ENCODE measurements at regions of chr6 and their contacts with region 1.

Region 1: DNA sequence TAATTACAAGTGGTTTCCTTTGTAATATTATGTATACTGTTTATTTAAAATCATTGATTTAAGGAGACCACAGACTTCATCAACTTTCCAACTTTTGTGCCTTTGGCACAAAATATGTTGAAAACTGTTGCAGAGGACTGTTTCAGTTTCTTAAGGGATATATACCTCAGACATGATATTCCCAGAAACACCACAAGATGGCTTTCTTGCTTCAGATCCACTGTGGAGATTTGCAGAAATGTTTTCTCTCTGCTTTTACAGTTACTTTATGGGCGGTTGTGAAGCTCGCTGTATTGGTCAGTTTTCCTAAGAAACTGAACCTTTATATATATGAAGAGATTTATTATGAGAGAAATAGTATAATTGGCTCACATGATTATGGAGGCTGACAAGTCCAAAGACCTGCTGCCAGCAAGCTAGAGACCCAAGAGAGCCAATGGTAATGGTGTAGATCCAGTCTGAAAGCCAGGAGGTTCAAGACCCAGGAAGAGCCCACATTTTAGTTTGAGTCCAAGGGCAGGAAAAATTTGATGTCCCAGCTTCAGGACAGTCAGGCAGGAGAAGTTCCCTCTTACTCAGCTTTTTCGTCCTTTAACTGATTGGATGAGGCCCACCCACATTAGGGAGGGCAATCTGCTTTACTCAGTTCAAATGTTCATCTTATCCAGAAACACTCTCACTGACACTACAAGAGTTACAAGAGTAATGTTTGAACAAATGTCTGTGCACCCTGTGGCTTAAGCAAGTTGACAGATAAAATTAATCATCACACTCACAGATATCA is 12.8 kb downstream of the ME1 start:
- DNase-seq: peak; percentile 60
- H3K4me3 Mint-ChIP-seq: no peak overlapping the region
- H3K27ac Mint-ChIP-seq: no peak overlapping the region
- H3K4me1 Mint-ChIP-seq: no peaks in the 10 kb centered on the region
- H3K27me3 Mint-ChIP-seq: no peaks in the 10 kb centered on the region
- CTCF ChIP-seq: peak; percentile 60

Region 2: DNA sequence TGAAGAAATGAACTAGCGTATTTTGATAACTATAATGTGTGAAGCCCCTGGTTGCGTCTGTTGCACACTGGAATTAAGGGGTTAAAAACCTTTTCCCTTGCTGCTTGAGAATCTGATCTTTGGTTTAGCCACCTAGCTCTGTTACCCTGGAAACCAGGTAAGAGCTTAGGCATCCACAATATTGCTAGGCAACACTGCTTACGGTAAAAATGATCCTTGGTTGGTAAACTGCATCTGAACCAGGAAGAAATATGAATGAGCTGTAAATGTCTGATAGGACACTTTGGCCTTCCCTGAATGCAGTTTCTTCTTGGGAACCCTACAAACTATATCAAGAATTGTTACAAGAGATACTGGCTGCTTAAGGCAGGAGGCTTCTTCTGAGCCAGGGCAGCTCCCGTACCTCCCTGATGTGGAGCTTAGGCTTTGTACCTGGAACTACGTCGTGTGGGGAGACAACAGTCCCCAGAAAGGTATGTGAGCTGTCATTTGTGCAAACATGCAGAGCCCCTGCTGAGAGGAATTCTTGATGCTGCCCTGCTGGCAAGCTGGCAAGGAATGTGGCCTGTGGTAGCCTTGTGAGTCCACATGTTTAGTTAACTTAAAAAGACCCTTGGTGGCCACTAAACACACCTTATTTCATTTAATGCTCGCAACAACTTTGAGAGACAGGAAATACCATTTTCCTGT is 370.9 kb before region 1 on chr6:
- CTCF ChIA-PET with region 1: no interaction called
- POLR2A ChIA-PET with region 1: no interaction called
- intact Hi-C with region 1: no loop called
- DNase-seq: no peak
- H3K4me3 Mint-ChIP-seq: no peak overlapping the region
- H3K27ac Mint-ChIP-seq: no peak overlapping the region
- H3K4me1 Mint-ChIP-seq: no peaks in the 10 kb centered on the region
- H3K27me3 Mint-ChIP-seq: no peaks in the 10 kb centered on the region
- CTCF ChIP-seq: no peak

Region 3: DNA sequence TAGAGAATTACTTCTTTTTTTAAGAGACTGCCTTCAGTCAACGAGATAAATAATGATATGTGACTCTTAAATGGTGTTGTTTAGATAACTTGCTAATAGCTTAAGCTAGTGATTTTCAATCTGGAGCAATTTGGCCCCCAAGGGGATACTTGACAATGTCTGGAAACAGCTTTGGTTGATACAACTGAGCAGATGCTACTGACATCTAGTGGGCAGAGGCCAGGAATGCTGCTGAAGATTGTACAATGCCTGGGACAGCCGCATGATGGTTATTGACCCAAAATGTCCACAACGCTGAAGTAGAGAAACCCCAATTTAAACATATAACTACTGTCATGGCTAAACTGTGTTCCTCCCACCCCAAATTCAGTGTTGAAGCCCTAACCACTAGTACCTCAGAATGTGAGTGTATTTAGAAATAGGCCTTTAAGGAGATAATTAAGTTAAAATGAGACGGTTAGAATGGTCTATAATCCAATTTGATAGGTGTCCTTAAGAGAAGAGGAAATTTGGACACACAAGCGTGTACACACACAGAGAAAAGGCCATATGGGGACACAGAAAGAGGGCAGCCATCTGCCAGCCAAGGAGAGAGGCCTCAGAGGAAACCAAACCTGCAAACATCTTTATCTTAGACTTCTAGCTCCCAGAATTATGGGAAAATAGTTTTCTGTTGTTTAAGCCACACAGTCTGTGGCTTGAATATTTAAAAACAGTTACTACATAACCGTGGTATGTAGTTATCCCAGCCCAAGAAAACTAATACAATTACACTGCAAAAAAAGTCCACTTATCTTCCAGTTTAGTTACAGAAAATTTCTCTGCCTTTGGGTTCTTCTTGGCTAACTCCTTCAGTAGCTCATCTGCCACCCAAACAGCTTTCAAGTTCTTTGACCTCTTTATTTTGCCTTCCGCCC is 202.7 kb before region 1 on chr6:
- CTCF ChIA-PET with region 1: interaction called, 23 read pairs
- POLR2A ChIA-PET with region 1: no interaction called
- intact Hi-C with region 1: no loop called
- DNase-seq: peak; percentile 77
- H3K4me3 Mint-ChIP-seq: no peak overlapping the region
- H3K27ac Mint-ChIP-seq: no peak overlapping the region
- H3K4me1 Mint-ChIP-seq: no peaks in the 10 kb centered on the region
- H3K27me3 Mint-ChIP-seq: no peaks in the 10 kb centered on the region
- CTCF ChIP-seq: peak; percentile 71

Region 4: GRCh38 chr6:83221889-83222479 is 196.1 kb before region 1 on chr6:
- CTCF ChIA-PET with region 1: interaction called, 50 read pairs
- POLR2A ChIA-PET with region 1: interaction called, 7 read pairs
- intact Hi-C with region 1: loop called (anchors 1 kb)
- DNase-seq: peak; percentile 41
- H3K4me3 Mint-ChIP-seq: no peak overlapping the region
- H3K27ac Mint-ChIP-seq: no peak overlapping the region
- H3K4me1 Mint-ChIP-seq: no peaks in the 10 kb centered on the region
- H3K27me3 Mint-ChIP-seq: no peaks in the 10 kb centered on the region
- CTCF ChIP-seq: peak; percentile 39

Region 5: DNA sequence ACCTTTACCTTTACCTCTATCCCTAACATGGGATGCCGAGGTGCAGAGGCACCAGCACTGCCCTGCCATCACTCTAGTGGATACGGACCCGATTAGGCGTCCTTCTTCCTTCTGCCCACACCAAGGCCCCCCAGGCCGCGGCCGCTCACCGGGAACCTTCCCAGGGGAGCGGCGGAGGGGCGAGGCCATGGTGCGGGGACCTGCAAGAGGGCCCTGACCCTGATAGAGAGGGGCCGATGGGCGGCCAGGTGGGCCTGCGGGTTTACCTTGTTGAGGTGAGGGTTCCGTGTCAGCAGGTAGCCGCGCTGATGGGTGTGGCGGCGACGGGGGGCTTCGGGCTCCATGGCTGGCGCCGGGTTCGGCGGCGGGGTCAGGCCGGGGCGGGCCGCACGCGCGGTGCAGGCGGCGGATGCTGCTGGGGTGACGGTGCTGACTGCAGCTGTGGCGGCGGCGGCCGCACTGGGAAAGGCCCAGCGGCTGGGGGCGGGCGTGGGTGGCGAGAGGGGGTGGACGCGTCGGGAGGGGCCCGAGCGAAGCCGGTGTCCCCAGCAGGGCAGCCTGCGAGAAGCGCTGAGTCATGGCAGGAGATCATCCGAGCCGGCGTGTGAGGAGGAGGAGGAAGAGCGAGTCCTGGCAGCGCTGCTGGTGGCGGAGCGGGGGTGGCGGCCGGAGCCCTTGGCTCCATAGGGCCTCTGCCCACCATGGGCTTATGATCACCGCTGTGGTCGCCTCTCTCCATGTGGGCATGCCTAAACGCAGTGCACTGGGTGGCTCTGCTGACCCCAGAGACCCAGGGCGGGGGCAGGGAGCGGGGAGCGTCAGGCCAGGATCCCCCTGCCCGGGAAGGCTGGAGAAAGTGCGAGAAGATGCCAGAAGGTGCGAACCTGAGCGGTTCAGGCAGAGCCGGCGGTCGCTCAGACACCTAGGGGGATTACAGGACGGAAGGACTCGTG is 12.8 kb after region 1 on chr6 and contains the start of gene ME1:
- CTCF ChIA-PET with region 1: interaction called, 12 read pairs
- POLR2A ChIA-PET with region 1: no interaction called
- intact Hi-C with region 1: no loop called
- DNase-seq: peak; percentile 86
- H3K4me3 Mint-ChIP-seq: peak within 1 kb of the TSS; percentile 74
- H3K27ac Mint-ChIP-seq: peak within 1 kb of the TSS; percentile 73
- H3K4me1 Mint-ChIP-seq: peaks cover 16% of the 10 kb centered on the region
- H3K27me3 Mint-ChIP-seq: no peaks in the 10 kb centered on the region
- CTCF ChIP-seq: no peak
- total RNA-seq, gene ME1: 16.7 and 17.8 TPM in 2 replicates

Region 6: GRCh38 chr6:83505356-83505755 is 87.3 kb after region 1 on chr6:
- CTCF ChIA-PET with region 1: interaction called, 380 read pairs
- POLR2A ChIA-PET with region 1: no interaction called
- intact Hi-C with region 1: no loop called
- DNase-seq: no peak
- H3K4me3 Mint-ChIP-seq: no peak overlapping the region
- H3K27ac Mint-ChIP-seq: no peak overlapping the region
- H3K4me1 Mint-ChIP-seq: no peaks in the 10 kb centered on the region
- H3K27me3 Mint-ChIP-seq: no peaks in the 10 kb centered on the region
- CTCF ChIP-seq: no peak

Measured in MCF 10A (cell line).